ENCODE measurements at regions of chr17 and their contacts with region 1.

Region 1: GRCh38 chr17:50865984-50866774 is at the start of gene TOB1:
- DNase-seq: peak; percentile 92 to 96 (median 94)
- ATAC-seq: peak; percentile 89
- H3K4me3 ChIP-seq: peak within 1 kb of the TSS; percentile 88
- H3K27ac ChIP-seq: peak within 1 kb of the TSS; percentile 88
- H3K4me1 ChIP-seq: peaks cover 11 to 13% of the 10 kb centered on the region in 2 experiments; a peak in 4 of 5 replicates
- H3K27me3 ChIP-seq: no peaks in the 10 kb centered on the region
- CTCF ChIP-seq: no peak
- EP300 ChIP-seq: no peak
- POLR2A ChIP-seq: peak; percentile 99
- RAD21 ChIP-seq: no peak; a peak in 1 of 4 replicates
- polyA plus RNA-seq, gene TOB1: 44.9 to 63.7 TPM

Region 2: GRCh38 chr17:50560185-50560824 is 305.9 kb before region 1 on chr17 and contains the start of gene CACNA1G:
- CTCF ChIA-PET with region 1: no interaction called
- POLR2A ChIA-PET with region 1: no interaction called
- in situ Hi-C with region 1: no loop called
- intact Hi-C with region 1: no loop called
- DNase-seq: peak; percentile 91 to 99 (median 98)
- ATAC-seq: peak; percentile 99
- H3K4me3 ChIP-seq: peak within 1 kb of the TSS; percentile 37
- H3K27ac ChIP-seq: no peak within 1 kb of the TSS
- H3K4me1 ChIP-seq: peaks cover 9 to 38% of the 10 kb centered on the region in 2 experiments
- H3K27me3 ChIP-seq: peaks cover 25 to 54% of the 10 kb centered on the region in 2 experiments
- CTCF ChIP-seq: peak in 1 of 3 experiments; percentile 11; a peak in 1 of 6 replicates
- EP300 ChIP-seq: no peak
- POLR2A ChIP-seq: no peak
- RAD21 ChIP-seq: no peak
- polyA plus RNA-seq, gene CACNA1G: not detected

Region 3: GRCh38 chr17:50808888-50809287 is 57.3 kb before region 1 on chr17:
- CTCF ChIA-PET with region 1: no interaction called
- POLR2A ChIA-PET with region 1: no interaction called
- in situ Hi-C with region 1: no loop called
- intact Hi-C with region 1: no loop called
- DNase-seq: no peak
- ATAC-seq: no peak
- H3K4me3 ChIP-seq: no peak overlapping the region
- H3K27ac ChIP-seq: no peak overlapping the region
- H3K4me1 ChIP-seq: peaks cover 0 to 3% of the 10 kb centered on the region in 2 experiments; a peak in 1 of 5 replicates
- H3K27me3 ChIP-seq: peaks cover 3 to 7% of the 10 kb centered on the region in 2 experiments; a peak in 4 of 5 replicates
- CTCF ChIP-seq: no peak
- EP300 ChIP-seq: no peak
- POLR2A ChIP-seq: no peak
- RAD21 ChIP-seq: no peak

Region 4: DNA sequence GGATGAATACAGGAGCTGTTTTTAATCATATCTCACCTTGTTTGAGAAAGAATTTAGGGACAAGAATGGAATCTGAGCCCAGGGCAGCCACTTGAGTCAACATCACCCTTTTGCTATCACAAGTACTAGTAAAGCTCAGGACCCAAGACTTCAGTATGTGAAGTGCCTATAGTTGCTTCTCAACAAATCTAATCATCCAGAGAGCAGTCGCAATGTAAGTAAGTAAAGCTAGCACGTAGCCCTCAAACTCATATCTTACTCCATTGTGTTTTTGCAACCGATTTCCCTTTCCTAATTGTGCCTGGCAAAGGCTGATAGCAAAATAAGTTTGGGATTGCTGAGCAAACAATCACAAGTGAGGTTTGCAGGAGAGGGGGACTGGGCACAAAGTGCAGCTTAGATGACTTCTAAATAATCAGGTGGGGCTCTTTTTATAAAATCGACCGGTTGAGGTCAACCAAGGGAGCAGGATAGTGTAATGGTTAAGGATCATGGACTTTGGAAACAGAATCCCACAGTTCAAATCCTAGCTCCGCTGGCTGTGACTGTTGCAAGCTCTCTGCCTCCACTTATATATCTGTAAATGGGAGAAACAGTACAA is 13.1 kb before region 1 on chr17:
- CTCF ChIA-PET with region 1: no interaction called
- POLR2A ChIA-PET with region 1: interaction called, 146 read pairs
- in situ Hi-C with region 1: no loop called
- intact Hi-C with region 1: no loop called
- DNase-seq: no peak
- ATAC-seq: no peak
- H3K4me3 ChIP-seq: no peak overlapping the region
- H3K27ac ChIP-seq: no peak overlapping the region
- H3K4me1 ChIP-seq: peaks cover 3 to 16% of the 10 kb centered on the region in 2 experiments; a peak in 3 of 5 replicates
- H3K27me3 ChIP-seq: no peaks in the 10 kb centered on the region
- CTCF ChIP-seq: no peak
- EP300 ChIP-seq: no peak
- POLR2A ChIP-seq: no peak
- RAD21 ChIP-seq: no peak

Region 5: DNA sequence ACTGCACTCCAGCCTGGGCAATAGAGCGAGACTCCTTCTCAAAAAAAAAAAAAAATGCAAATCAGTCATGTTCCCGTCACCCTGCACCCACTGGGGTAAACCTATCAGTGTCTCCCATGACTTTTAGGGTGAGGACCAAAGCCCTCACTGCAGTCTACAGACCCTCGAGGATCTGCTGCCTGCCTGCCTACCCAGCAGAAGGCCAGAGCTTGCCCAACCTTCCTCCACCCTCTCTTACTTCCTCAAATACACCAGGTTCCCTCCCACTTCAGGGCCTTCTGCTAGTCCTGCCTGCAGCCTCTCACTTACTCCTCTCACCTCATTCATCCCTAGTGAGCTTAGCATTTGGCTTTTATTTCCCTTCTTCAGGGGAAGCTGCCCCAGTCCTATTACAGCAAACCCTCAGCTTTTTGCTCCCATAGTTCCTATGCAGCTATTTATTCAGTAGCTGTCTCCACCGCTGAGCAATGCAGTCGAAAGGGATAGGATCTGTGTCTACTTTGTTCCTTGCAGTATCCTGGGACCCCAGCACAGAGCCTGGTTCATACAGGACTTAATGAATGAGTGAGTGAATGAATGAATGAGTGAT is 17.8 kb after region 1 on chr17:
- CTCF ChIA-PET with region 1: no interaction called
- POLR2A ChIA-PET with region 1: interaction called, 48 read pairs
- in situ Hi-C with region 1: no loop called
- intact Hi-C with region 1: no loop called
- DNase-seq: peak in 1 of 4 experiments; percentile 43
- ATAC-seq: peak; percentile 71
- H3K4me3 ChIP-seq: no peak overlapping the region
- H3K27ac ChIP-seq: peak overlapping the region; percentile 44
- H3K4me1 ChIP-seq: peaks cover 19 to 23% of the 10 kb centered on the region in 2 experiments; a peak in 4 of 5 replicates
- H3K27me3 ChIP-seq: no peaks in the 10 kb centered on the region
- CTCF ChIP-seq: no peak
- EP300 ChIP-seq: no peak
- POLR2A ChIP-seq: no peak
- RAD21 ChIP-seq: no peak

Region 6: GRCh38 chr17:50902372-50903353 is 36.5 kb after region 1 on chr17:
- CTCF ChIA-PET with region 1: no interaction called
- POLR2A ChIA-PET with region 1: interaction called, 13 read pairs
- in situ Hi-C with region 1: no loop called
- intact Hi-C with region 1: no loop called
- DNase-seq: peak in 1 of 4 experiments; percentile 15
- ATAC-seq: peak; percentile 13; the same call in 1 of the 3 replicates
- H3K4me3 ChIP-seq: no peak overlapping the region
- H3K27ac ChIP-seq: no peak overlapping the region
- H3K4me1 ChIP-seq: peaks cover 12 to 17% of the 10 kb centered on the region in 2 experiments; a peak in 4 of 5 replicates
- H3K27me3 ChIP-seq: no peaks in the 10 kb centered on the region
- CTCF ChIP-seq: no peak
- EP300 ChIP-seq: no peak
- POLR2A ChIP-seq: no peak
- RAD21 ChIP-seq: no peak

Region 7: DNA sequence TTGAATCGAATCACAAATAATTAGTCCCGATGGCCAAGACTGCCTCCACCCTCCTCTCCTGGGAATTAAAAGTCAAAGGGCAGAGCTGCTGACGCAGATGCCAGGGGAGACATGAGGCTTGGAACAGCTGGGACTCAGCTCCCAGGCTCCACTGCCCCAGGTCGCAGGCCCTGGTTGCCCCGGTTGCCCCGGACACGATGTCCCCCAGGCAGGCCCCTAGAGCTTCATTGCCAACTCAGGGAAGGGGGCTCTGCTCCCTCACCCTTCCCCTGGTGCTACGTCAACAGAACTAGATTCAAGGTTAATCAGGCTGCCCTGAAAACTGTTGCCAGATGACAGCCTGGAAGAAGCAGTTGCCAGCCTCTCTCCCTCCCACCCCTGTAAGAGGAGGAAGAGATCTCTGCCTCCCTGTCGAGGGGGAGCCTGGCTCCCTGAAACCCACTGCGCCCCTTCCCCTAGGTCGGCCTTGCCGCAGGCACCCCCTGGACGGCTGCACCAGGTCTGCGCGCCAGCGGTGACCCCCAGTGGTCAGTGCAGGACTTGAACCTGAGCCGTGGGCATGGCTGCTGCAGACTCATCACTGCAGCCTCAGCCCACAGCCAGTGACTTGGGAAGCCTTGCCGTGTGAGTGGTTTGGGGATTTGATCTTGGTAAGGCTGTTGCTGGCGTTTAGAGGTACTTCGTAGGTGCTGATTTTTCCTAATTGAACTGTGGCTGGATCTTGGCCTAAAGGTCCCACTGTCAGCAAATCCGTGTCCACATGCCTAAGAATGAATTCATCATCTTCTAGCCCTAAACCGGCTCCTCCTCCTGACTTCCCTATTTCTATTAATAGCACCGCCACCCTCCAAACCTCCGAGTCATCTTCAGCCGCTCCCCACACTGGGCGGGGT is 84.1 kb after region 1 on chr17:
- CTCF ChIA-PET with region 1: interaction called, 11 read pairs
- POLR2A ChIA-PET with region 1: interaction called, 207 read pairs
- in situ Hi-C with region 1: loop called (anchors 5 kb)
- intact Hi-C with region 1: loop called (anchors 1 kb)
- DNase-seq: peak; percentile 80 to 89 (median 84)
- ATAC-seq: peak; percentile 93
- H3K4me3 ChIP-seq: peak overlapping the region; percentile 9
- H3K27ac ChIP-seq: peak overlapping the region; percentile 73
- H3K4me1 ChIP-seq: peaks cover 46 to 74% of the 10 kb centered on the region in 2 experiments
- H3K27me3 ChIP-seq: no peaks in the 10 kb centered on the region
- CTCF ChIP-seq: peak; percentile 88 to 93 (median 92)
- EP300 ChIP-seq: no peak
- POLR2A ChIP-seq: no peak
- RAD21 ChIP-seq: peak; percentile 97 to 99

Region 8: GRCh38 chr17:51166197-51166986 is 300.2 kb after region 1 on chr17 and contains the start of gene NME2:
- CTCF ChIA-PET with region 1: no interaction called
- POLR2A ChIA-PET with region 1: interaction called, 4 read pairs
- in situ Hi-C with region 1: no loop called
- intact Hi-C with region 1: loop called (anchors 5 kb)
- DNase-seq: peak; percentile 95 to 96 (median 96)
- ATAC-seq: peak; percentile 96
- H3K4me3 ChIP-seq: peak within 1 kb of the TSS; percentile 94
- H3K27ac ChIP-seq: peak within 1 kb of the TSS; percentile 92
- H3K4me1 ChIP-seq: peaks cover 6 to 33% of the 10 kb centered on the region in 2 experiments; a peak in 4 of 5 replicates
- H3K27me3 ChIP-seq: no peaks in the 10 kb centered on the region
- CTCF ChIP-seq: 0 out of 6 replicates have a peak, but pooled peaks of 1 of the 3 experiments have one; percentile 17
- EP300 ChIP-seq: no peak
- POLR2A ChIP-seq: peak; percentile 85
- RAD21 ChIP-seq: no peak; a peak in 1 of 4 replicates
- polyA plus RNA-seq, gene NME2: 684 to 924 TPM

Measured in K562 (cell line).